ENCODE measurements at regions of chrX and their contacts with region 1.

Region 1: DNA sequence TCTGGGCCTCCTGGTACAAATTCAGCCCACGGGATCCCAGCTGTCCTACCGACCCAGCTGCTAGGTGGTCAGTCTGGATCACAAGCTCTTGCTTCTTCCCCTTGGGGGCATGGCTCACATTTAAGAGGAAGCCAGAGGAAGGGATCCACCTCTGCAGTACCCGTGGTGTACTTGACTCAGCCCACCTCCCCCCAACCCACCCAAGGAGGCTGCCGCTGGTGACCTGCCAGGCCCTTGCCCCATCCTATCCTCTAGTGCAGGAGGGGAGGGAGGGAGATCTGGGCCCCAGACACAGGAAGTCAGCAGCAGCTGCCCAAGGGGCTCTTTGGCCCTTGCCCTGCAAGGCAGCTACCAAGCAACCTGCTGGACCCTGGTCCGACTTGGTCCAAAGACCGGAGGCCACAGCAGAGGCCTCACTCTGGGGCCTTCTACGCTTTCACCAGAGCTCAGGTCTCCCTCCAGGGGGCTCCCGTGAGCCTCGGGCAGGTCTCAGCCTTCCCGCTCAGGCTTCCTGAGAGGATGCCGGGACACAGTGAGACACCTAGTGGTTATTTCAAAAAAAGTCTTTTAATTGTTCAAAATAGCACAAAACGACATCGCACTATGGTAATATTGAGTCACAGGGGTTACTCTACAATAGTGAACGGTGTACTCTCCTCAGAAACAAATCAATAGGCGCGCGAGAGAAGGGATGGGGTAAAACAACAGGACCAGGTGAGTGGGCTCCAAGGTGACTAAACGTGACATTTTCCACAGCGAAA is 2.7 kb upstream of the RENBP start:
- DNase-seq: peak; percentile 83
- H3K4me3 Mint-ChIP-seq: no peak overlapping the region
- H3K27ac Mint-ChIP-seq: peak overlapping the region; percentile 86
- H3K4me1 Mint-ChIP-seq: peaks cover 28% of the 10 kb centered on the region
- H3K27me3 Mint-ChIP-seq: no peaks in the 10 kb centered on the region

Region 2: DNA sequence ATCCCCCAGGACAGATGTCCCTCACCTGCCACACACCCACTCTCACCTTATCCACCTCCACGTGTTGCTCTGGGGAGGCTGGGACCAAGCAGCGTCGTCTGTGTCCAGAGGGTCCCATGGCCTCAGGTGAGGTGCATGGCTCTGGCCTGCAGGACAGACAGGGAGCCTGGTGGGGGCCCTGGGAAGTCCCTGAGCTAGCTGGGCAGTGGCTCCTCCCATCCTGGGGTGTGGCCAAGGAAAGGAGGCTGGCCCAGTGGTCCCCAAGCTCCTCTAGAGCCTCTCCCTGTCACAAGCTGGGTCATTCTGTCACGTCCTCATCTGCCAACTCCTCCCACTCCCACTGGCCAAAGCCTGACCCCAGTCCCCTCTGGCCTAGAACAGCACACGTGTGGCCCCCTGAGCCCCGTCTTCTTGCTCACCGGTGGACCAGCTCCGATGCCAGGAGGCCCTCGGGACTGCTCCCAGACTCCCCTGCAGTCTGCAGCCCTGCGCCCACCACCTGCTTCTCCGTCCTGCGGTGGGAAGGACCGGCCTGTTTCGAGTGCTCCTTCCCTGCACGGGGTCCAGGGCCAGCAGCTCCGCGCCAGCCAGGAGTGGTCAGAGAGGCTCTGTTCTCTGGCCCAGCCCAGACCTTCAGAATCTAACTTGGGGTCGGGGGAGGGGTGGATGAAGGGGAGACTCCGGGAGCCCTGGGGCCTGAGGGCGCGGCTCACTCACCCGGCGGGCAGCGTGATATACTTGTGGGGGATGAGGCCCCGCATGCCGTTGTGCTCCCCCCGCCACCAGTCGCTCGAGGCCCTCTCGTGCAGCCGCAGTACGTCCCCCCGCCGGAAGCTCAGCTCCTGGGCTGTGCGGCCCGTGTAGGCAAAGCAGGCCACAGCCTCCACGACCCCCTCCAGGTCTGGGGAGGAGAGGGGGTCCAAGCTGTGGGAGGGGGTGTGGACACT is 37.9 kb before region 1 on chrX:
- CTCF ChIA-PET with region 1: interaction called, 11 read pairs
- POLR2A ChIA-PET with region 1: no interaction called
- DNase-seq: no peak
- H3K4me3 Mint-ChIP-seq: no peak overlapping the region
- H3K27ac Mint-ChIP-seq: no peak overlapping the region
- H3K4me1 Mint-ChIP-seq: peaks cover 9% of the 10 kb centered on the region
- H3K27me3 Mint-ChIP-seq: no peaks in the 10 kb centered on the region

Region 3: DNA sequence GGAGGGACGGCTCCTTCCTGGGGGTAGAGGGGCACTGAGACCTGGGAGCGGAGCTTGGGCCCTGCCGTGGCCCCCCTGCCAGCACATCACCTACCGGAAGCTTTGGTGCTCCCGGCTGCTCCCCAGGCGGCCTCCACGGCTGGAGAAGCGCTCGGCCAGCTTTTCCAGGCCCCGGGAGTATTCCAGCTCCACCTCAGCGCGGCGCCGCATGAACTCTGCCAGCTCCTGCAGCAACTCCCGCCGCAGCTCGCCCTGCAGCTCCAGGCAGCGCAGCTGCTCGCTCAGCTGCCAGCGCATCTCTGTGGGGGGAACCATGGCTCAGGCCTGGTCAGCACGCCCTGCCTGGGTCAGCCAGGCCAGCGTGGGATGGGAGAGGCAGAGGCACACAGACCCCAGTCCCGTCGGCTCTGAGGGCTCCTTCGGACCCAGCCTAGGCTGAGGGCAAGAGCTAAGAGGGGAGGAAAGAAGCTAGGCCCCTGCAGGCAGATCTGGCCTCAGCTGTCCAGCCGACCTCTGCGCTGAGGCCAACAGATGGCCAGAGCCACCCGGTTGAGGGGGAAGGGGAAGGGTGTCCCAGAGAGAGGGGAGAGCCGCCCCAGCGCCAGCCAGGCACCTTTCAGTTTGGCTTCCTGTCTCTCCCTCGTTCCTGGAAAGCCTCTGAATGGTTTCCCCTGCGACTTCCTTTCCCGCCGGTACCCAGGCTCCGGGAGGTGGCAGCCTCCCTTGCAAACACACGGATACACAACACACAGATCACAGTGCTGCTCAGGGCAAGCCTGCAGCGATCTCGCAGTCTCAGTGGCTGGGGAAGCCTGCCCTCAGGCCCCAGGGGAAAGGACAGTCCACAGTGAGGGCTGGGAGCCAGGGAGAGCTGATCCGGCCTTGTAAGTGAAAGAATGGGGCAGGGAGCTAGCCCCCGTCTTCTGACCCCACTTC is 25.4 kb before region 1 on chrX:
- CTCF ChIA-PET with region 1: interaction called, 205 read pairs
- POLR2A ChIA-PET with region 1: no interaction called
- DNase-seq: no peak
- H3K4me3 Mint-ChIP-seq: peak overlapping the region; percentile 90
- H3K27ac Mint-ChIP-seq: peak overlapping the region; percentile 73
- H3K4me1 Mint-ChIP-seq: peaks cover 18% of the 10 kb centered on the region
- H3K27me3 Mint-ChIP-seq: no peaks in the 10 kb centered on the region

Region 4: DNA sequence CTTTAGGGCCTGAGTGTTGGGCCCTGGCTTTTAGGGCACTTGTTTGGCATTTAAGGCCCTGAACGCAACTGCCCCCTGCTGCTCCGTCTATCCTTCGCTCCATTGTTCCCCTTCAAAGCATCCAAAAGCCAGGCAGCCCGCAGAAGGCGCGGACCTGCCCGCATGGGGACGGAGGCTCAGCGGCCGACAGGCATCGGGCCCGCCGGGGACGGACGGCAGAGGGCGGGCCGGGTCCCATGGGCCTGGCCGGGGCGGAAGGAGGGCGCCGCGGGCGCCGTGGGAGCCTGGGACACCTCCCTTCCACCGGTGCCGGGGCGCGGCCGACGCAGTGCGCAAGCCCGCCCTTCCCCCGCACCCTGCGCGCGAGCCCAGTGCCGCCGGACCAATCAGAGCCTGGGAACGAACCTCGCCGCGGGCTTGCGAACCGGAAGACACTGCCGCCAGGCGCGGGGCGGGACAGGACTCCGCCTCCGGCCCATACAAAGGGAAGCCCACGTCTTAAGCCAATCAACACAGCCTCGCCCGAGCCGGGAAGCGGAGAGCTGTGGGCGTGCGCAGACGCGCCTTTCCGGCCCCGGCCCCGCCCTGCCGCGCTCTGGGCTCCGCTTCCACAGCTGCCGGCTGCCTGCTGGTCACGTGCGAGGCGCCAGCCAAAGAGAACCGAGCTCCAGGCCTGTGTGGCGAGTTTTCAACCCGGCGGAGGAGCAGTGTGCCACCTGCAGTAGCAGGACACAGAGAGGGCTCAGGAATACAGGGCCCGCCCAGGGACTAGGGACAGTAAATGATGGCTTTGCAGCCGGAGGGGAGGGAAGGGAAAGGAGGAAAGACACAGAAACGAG is 19.0 kb before region 1 on chrX:
- CTCF ChIA-PET with region 1: interaction called, 205 read pairs
- POLR2A ChIA-PET with region 1: no interaction called
- DNase-seq: peak; percentile 93
- H3K4me3 Mint-ChIP-seq: peak overlapping the region; percentile 90
- H3K27ac Mint-ChIP-seq: peak overlapping the region; percentile 98
- H3K4me1 Mint-ChIP-seq: peaks cover 27% of the 10 kb centered on the region
- H3K27me3 Mint-ChIP-seq: no peaks in the 10 kb centered on the region

Region 5: DNA sequence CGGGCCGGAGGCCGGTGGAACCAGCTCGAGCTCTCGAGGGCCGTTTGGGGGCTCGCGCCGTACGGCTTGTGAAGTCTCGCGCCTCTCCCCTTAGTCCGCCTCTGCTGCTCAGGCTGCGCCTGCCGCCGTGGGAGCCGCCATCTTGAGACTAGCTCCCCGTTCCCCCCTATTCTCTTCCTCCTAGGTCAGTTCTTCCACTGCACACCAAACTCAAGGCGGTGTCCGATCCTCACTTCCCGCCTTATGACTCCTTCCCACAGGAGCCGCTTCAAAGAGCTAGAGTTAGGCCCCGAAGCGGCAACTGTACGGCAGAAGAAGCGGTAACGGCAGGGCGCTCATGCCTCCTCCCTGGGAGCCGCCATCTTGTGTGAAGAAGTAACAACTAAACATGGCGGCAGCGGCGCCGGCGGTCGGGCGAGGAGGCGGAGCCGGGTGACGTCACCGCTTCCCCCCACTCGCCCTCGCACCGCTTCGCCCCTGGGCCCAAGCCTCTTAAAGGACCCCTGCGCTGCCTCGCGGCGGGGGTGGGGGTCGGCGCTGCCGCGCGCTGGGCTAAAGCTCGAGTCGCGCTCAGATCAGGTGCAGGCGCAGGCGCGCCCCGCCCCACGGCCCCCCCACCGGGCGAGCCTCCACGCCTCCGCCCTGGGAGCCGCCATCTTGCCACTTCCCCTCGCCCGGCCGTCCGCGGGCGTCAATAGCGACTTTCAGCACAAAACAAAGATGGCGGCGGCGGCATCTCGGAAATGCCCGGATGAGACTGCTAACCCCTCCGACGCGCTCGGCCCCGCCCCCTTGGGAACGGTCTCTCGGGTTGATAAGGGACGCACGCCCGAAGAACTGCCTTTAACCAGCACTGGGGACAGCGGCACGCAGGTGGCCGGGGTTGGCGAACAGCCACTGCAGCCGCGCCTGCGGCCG is 24.5 kb after region 1 on chrX and contains the start of gene HCFC1:
- CTCF ChIA-PET with region 1: interaction called, 82 read pairs
- POLR2A ChIA-PET with region 1: no interaction called
- DNase-seq: peak; percentile 90
- H3K4me3 Mint-ChIP-seq: peak within 1 kb of the TSS; percentile 100
- H3K27ac Mint-ChIP-seq: peak within 1 kb of the TSS; percentile 100
- H3K4me1 Mint-ChIP-seq: peaks cover 38% of the 10 kb centered on the region
- H3K27me3 Mint-ChIP-seq: no peaks in the 10 kb centered on the region
- total RNA-seq, gene HCFC1: 116 to 121 TPM

Region 6: DNA sequence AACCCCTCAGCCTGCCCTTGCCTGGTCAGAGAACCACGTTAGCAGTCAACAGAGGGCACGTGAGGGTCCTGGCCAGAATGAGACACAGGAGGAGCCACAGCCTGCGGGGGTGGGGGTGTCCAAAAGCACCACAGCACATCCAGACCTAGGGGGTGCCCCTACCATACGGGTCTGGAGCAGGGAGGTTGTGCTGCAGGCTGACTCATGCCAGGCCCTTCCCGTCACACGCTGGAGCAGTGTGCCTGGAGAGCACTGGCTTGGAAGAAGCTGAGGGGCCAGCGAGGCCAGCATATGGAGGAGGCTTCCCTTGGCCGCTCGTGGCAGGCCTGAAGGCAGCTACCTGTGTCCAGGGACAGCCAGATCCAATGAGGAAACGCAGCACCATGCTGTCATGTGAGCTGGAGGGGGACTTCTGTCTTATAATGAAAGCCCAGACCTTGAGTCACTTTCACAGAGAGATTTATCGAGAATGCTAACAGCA is 74.0 kb after region 1 on chrX:
- CTCF ChIA-PET with region 1: no interaction called
- POLR2A ChIA-PET with region 1: no interaction called
- DNase-seq: no peak
- H3K4me3 Mint-ChIP-seq: no peak overlapping the region
- H3K27ac Mint-ChIP-seq: no peak overlapping the region
- H3K4me1 Mint-ChIP-seq: peaks cover 17% of the 10 kb centered on the region
- H3K27me3 Mint-ChIP-seq: no peaks in the 10 kb centered on the region

Region 7: GRCh38 chrX:154063234-154063633 is 116.0 kb after region 1 on chrX:
- CTCF ChIA-PET with region 1: no interaction called
- POLR2A ChIA-PET with region 1: no interaction called
- DNase-seq: no peak
- H3K4me3 Mint-ChIP-seq: no peak overlapping the region
- H3K27ac Mint-ChIP-seq: no peak overlapping the region
- H3K4me1 Mint-ChIP-seq: peaks cover 45% of the 10 kb centered on the region
- H3K27me3 Mint-ChIP-seq: no peaks in the 10 kb centered on the region

Measured in activated CD4-positive, alpha-beta T cell treated with anti-CD3 and anti-CD28 coated beads, Interleukin-2, amount 10 ng/mL, durations not matched to agents 7 days and 5 days (primary cell).